Sigmoid colon (tissue), 7 donors: ENCODE measurements at regions of chr11 and their contacts with region 1.

Region 1: GRCh38 chr11:130390071-130390758 is 38.2 kb downstream of the ADAMTS8 start:
- DNase-seq: no peak
- H3K4me3 ChIP-seq: no peak overlapping the region
- H3K27ac ChIP-seq: peak overlapping the region; percentile 66 to 78 (median 76)
- H3K4me1 ChIP-seq: peaks cover 0 to 50% (median 44%) of the 10 kb centered on the region in 4 donors
- H3K27me3 ChIP-seq: no peaks in the 10 kb centered on the region
- CTCF ChIP-seq: peak in 3 of 4 experiments; percentile 4 to 37 (median 35)
- EP300 ChIP-seq: peak; percentile 26 to 92 (median 75)
- POLR2A ChIP-seq: no peak

Region 2: DNA sequence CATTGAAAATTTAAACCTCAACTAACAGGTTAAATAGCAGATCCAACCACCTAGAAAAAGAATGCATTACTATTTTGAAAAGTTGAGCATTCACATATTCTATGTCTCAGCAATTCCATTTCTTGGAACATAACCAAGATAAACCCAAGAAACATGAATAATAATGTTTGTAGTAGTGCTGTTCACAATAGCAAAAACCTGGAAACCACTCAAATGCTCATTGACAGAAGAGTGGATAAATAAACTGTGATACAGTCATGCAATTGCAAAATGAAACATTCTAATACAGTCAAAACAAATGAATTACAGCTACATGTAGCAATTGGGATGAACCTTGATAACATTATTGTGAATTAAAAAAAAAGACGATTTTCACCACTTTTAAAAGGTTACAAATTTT is 737.4 kb before region 1 on chr11:
- intact Hi-C with region 1: no loop called
- DNase-seq: no peak
- H3K4me3 ChIP-seq: no peak overlapping the region
- H3K27ac ChIP-seq: no peak overlapping the region
- H3K4me1 ChIP-seq: no peaks in the 10 kb centered on the region
- H3K27me3 ChIP-seq: no peaks in the 10 kb centered on the region
- CTCF ChIP-seq: no peak
- EP300 ChIP-seq: no peak
- POLR2A ChIP-seq: no peak

Region 3: GRCh38 chr11:129865701-129866100 is 524.5 kb before region 1 on chr11:
- intact Hi-C with region 1: no loop called
- DNase-seq: no peak
- H3K4me3 ChIP-seq: no peak overlapping the region
- H3K27ac ChIP-seq: no peak overlapping the region
- H3K4me1 ChIP-seq: peaks cover 0 to 14% (median 10%) of the 10 kb centered on the region in 4 donors
- H3K27me3 ChIP-seq: no peaks in the 10 kb centered on the region
- CTCF ChIP-seq: no peak
- EP300 ChIP-seq: no peak
- POLR2A ChIP-seq: no peak

Region 4: DNA sequence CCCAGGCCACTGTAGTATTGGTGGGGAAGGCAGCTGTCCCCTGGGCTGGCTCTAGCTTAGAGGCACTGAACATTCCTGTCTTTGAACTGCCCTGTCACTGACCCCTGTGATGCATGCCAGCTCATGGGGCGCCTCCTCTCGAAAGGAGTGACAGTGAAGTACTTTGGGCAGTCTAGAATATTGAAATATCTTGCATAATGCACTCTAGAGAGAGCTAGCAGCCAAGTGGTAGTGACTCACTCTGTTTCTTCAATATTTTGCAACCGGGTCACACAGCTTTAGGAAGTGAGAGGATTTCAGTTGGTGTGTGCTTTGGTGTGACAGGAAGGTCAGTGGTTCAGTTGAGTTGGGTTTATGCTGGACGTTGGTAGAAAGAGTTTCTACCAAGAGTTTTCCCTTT is 266.1 kb before region 1 on chr11:
- intact Hi-C with region 1: no loop called
- DNase-seq: peak; percentile 86
- H3K4me3 ChIP-seq: no peak overlapping the region
- H3K27ac ChIP-seq: peak overlapping the region; percentile 39 to 71 (median 47)
- H3K4me1 ChIP-seq: peaks cover 0 to 11% (median 8%) of the 10 kb centered on the region in 4 donors
- H3K27me3 ChIP-seq: no peaks in the 10 kb centered on the region
- CTCF ChIP-seq: no peak
- EP300 ChIP-seq: peak in 1 of 4 donors; percentile 15
- POLR2A ChIP-seq: no peak

Region 5: DNA sequence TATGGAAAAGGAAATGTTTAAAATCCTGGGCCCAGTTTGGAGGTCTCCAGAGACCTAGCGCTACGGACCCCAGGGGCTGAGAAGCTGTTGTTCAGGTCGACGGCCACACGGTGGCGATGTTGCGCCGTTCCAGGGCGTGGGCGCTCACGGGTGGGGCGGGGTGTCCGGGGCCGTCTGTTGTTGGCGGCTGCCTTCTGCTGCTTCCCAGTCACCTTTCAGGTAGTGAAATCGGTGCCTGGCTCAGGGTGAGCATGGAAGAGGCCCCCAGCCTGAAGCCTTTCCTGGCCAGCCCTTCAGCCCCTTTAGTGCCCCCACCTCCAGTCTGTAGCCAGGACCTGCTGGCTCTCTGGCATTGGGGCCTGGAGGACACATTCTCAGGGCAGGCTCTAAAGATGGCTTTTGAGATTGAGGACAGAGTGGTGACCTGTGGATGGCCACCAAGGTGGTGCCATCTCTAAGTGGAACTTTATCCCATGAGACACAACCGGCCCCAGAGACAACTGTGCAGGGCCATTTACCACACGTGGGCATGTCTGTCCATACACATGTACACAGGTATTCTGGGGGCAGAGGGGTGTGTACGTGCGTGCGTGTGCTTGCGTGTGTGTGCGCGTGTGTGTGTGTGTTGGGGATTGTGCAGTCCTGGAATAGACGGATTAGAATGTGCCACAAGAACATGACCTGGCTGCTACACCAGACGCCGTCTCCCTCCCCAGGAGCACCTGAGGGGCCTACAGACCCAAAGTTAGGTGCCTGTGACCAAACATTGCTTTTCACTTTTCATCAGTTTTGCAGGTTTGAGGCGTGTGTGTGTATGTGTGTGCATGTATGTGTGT is 176.9 kb before region 1 on chr11:
- intact Hi-C with region 1: loop called (anchors 5 kb)
- DNase-seq: peak; percentile 77
- H3K4me3 ChIP-seq: no peak overlapping the region
- H3K27ac ChIP-seq: no peak overlapping the region
- H3K4me1 ChIP-seq: peaks cover 0 to 8% (median 0%) of the 10 kb centered on the region in 4 donors
- H3K27me3 ChIP-seq: no peaks in the 10 kb centered on the region
- CTCF ChIP-seq: peak; percentile 89 to 95 (median 90)
- EP300 ChIP-seq: no peak
- POLR2A ChIP-seq: no peak

Region 6: GRCh38 chr11:130314750-130315285 is 75.4 kb before region 1 on chr11 and contains the start of gene ZBTB44:
- intact Hi-C with region 1: loop called (anchors 2 kb)
- DNase-seq: peak; percentile 96
- H3K4me3 ChIP-seq: peak within 1 kb of the TSS; percentile 67 to 92 (median 72)
- H3K27ac ChIP-seq: peak within 1 kb of the TSS; percentile 86 to 96 (median 93)
- H3K4me1 ChIP-seq: peaks cover 0 to 42% (median 35%) of the 10 kb centered on the region in 4 donors
- H3K27me3 ChIP-seq: no peaks in the 10 kb centered on the region
- CTCF ChIP-seq: no peak
- EP300 ChIP-seq: no peak
- POLR2A ChIP-seq: peak; percentile 10 to 25
- total RNA-seq, gene ZBTB44: 73.0 to 162 (median 117) TPM

Region 7: DNA sequence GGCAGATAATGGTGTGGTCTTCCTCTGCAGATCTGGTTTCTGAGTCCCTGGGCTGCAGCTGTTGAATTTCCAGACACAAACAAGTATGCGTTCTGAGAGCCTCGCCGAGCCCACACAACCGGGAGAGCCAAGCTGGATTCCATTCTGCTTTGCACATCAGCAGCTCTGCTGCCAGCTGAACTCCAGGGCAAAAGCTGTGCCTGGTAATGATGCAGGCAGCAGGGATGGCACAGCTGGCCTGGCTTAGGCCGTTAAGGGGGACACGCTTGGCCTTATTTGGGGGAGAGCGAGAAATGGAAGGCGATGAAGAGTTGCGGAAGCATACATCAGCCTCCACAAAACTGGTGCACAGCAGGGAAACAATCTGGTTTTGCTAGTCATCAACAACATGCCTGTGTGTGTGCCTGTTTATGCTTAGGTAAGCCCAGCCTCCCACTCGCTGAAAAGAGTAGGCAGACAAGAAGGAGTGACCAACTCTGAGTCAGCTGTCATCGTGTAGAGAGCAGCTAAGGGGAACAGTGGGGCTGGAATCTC is 13.1 kb after region 1 on chr11:
- intact Hi-C with region 1: loop called (anchors 2 kb)
- DNase-seq: peak; percentile 91
- H3K4me3 ChIP-seq: no peak overlapping the region
- H3K27ac ChIP-seq: peak overlapping the region; percentile 74 to 84 (median 82)
- H3K4me1 ChIP-seq: peaks cover 0 to 77% (median 70%) of the 10 kb centered on the region in 4 donors
- H3K27me3 ChIP-seq: no peaks in the 10 kb centered on the region
- CTCF ChIP-seq: no peak
- EP300 ChIP-seq: peak in 2 of 4 donors; percentile 34 to 47
- POLR2A ChIP-seq: no peak

Region 8: GRCh38 chr11:130427581-130428315 is 37.5 kb after region 1 on chr11:
- intact Hi-C with region 1: loop called (anchors 2 kb)
- DNase-seq: peak; percentile 84
- H3K4me3 ChIP-seq: peak overlapping the region; percentile 43 to 74 (median 60)
- H3K27ac ChIP-seq: peak overlapping the region; percentile 50 to 77 (median 59)
- H3K4me1 ChIP-seq: peaks cover 0 to 38% (median 30%) of the 10 kb centered on the region in 4 donors
- H3K27me3 ChIP-seq: peaks cover 0 to 11% (median 0%) of the 10 kb centered on the region in 3 donors
- CTCF ChIP-seq: peak; percentile 27 to 51 (median 50)
- EP300 ChIP-seq: no peak
- POLR2A ChIP-seq: no peak